ENCODE measurements at regions of chr1 and their contacts with region 1.

Region 1: GRCh38 chr1:28088168-28088961 is at the start of gene EYA3:
- DNase-seq: peak; percentile 99
- CTCF ChIP-seq: no peak

Region 2: DNA sequence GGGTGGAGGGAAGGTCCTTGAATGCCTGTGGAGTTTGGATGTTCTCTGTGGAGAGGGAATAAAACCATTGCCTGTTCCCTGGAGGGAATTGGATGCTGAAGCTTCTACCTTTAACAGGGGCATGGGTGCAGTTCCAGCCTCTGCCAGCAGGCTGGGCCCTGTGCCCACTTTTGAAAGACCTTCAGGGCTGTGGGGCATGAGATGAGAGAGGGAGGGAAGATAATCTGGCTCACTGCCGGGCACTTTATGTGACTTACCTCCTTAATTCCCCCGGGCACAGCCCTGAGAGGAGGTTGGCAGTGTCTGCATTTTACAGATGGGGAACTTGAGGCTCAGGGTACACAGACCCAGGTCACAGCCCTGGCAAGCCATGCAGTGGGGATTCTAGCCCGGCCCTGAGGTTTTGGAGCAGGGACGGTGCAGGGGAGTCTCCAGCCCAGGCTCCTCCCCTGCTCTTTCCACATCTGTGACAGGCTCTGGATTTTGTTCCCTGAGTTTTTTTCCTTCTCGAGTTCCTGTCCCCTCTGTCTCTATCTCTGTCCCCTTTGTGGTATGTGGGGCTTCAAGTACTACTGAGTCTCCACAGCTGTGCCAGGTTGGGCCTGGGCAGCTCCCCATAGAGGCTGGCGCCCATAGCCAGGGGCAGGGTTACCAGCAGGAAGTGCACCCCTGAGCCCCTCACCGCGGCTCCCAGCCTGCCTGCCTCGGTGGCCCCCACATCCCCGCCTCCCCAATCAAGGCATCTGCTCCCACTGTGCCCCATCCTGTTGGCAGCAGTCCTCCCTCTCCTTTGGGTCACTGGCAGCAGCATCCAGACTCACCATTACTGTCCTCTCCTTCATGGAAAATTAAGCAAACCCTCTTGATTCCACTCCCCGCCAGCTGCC is 230.1 kb before region 1 on chr1:
- CTCF ChIA-PET with region 1: interaction called, 10 read pairs
- POLR2A ChIA-PET with region 1: no interaction called
- DNase-seq: peak; percentile 82
- CTCF ChIP-seq: peak; percentile 99

Region 3: DNA sequence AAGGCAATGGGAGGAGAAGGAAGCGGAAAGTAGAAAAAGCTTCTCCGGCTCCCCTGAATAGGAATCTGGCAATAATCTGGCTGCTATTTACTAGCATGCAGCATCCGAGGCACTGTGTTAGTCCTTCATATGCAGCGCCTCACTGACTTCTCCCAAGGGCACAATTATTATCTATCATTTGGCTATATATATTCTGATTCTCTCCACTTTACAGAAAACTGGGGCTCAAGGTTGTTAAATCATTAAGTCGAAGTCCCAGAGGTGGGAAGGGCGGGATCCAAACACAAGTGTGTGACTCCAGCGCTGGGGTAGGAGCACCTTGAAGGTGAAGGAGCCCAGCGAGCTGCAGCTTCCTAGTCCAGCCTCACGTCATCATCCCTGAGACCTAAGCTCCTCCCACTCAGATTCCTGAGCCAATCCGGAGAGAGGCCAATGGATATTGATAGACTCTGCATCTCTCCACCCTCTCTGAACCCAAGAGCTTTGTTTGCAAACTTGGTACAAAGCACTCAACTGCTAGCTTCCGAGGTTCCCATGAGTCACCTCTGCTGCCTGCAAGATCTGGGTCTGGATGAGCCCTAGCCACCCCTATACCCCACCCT is 16.6 kb after region 1 on chr1:
- CTCF ChIA-PET with region 1: interaction called, 34 read pairs
- POLR2A ChIA-PET with region 1: no interaction called
- DNase-seq: no peak
- CTCF ChIP-seq: no peak

Region 4: GRCh38 chr1:28118640-28119307 is 30.4 kb after region 1 on chr1:
- CTCF ChIA-PET with region 1: interaction called, 13 read pairs
- POLR2A ChIA-PET with region 1: no interaction called
- DNase-seq: no peak
- CTCF ChIP-seq: no peak

Region 5: DNA sequence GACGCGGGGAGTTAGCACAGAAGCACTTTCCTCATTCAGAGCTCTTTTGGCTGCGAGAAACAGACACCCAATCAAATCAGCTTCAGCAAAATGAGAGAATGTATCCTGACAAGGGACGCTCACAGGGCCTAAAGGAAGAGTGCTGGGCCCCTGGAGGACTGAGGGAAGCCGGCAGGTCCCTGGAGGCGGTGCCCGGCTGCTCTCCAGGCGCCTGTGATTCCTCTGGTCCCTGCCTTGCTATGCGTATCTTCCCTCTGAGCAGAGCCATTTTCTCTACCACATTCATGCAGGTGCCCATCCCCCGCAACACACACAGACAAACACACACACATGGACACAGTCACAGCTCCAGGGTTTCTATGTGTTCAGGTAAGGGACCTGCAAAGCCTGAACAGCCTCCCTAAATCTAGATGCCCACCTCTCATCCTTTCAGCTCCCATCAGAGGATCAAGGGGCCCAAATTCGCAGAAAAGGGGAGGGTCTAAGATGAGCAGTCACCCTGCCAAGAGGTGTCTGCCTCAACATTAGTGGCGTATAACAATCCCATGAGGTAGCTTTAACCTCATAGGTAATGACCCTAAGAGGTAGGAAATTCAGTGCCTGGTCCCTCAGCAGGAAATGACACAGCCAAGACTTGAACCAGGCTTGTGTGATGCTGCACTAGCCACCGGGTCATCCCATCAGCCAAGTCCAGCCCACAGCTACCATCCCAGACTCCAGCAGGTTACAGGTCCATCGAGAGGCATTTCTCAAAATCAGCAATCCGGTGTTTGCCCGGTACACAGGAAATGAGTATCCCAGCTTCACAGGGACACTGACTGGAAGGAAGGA is 59.1 kb after region 1 on chr1:
- CTCF ChIA-PET with region 1: interaction called, 11 read pairs
- POLR2A ChIA-PET with region 1: interaction called, 4 read pairs
- DNase-seq: no peak
- CTCF ChIP-seq: no peak

Region 6: DNA sequence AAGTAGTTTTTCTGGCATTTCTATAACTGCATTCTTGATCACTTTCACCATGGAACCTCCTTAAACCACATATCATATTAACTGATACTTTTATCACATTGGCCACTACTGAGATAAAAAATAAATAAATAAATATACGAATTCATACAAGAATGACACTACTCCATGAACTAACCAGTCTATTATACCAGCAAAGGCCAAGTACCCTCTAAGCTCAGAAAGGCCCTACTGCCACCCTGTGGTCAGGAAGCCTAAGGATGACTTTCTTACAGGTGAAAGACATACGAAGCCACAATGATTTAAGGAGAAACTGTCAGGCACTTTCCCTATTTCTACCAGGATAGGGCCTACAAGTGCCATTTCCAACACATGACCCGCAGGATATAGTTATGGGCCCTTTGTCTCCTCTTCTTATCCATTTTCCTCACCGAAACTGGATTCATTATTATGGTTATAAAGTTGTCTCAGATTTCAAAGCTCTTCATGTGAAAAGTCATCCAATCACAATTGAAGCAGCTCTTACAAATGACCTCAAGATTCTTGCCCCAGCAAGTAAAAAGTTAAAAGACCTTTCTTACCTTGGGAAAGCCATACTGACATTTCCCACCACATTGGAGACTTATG is 120.6 kb after region 1 on chr1:
- CTCF ChIA-PET with region 1: interaction called, 247 read pairs
- POLR2A ChIA-PET with region 1: interaction called, 5 read pairs
- DNase-seq: peak; percentile 63
- CTCF ChIP-seq: peak; percentile 74

Measured in GM10248 (cell line).